A673 (cell line): ENCODE measurements at regions of chr16 and their contacts with region 1.

Region 1: DNA sequence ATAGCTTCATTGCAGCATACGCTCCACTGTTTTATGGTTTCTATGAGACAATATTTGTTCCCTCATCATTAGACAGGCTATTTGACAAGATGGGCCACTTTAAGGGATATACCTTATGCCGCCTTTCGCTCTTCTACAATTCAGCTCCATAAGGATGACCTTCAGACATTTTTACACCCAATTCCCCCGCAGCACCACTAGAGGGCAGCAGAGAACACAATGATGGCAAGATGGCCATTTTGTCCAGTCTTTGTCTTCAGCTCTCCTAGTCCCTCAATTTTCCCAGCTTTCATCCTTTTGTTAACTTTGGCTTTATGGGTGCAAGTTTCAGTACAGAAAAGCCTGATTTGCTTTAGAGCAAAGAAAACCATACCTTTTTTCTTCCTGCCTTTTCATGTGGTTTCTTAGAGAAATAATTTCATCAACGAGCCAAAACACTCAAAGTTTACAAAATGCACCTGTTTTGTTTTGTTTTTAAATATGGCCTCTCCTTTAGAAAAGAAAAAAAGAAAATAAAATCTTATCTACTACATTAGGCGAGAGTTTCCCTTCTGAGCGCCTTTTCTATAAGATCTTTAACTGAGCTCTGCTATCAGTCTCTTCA is 355.3 kb downstream of the TOX3 start:
- DNase-seq: peak; percentile 82
- H3K4me3 ChIP-seq: no peak overlapping the region
- H3K27ac ChIP-seq: no peak overlapping the region
- H3K4me1 ChIP-seq: no peaks in the 10 kb centered on the region
- H3K27me3 ChIP-seq: no peaks in the 10 kb centered on the region
- CTCF ChIP-seq: peak; percentile 91

Region 2: DNA sequence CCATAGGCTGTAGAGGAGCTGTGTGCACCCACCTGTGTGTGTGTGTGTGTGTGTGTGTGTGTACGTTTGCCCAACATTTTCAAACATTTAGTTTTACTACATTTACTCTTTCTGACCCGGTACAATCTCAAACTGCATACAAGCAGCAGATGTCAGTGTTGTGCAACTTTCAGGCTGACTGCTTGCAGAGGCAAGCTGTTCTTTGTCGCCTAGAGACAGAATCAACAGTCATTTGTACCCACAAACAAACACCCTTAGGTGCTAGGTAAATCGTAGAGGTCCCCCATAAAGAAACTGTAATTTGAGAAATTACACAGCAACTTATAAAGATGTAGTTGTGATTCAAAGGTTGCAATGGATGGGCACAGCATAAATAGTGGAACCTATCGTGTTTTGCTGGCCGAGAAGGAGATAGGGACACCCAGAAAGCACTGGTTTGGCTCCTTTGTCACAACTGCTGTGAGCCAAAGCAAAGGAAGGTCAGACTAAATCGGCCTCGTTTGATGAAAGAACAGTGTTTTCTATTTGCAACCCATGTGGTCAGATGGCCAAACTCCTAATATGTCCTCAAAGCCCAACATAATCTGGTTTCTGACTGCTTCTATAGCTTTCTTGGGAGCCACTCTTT is 123.1 kb before region 1 on chr16:
- CTCF ChIA-PET with region 1: interaction called, 11 read pairs
- POLR2A ChIA-PET with region 1: no interaction called
- intact Hi-C with region 1: loop called (anchors 1 kb)
- DNase-seq: peak; percentile 67
- H3K4me3 ChIP-seq: no peak overlapping the region
- H3K27ac ChIP-seq: no peak overlapping the region
- H3K4me1 ChIP-seq: peaks cover 3% of the 10 kb centered on the region
- H3K27me3 ChIP-seq: peaks cover 6% of the 10 kb centered on the region
- CTCF ChIP-seq: peak; percentile 60

Region 3: GRCh38 chr16:52456368-52456767 is 264.7 kb after region 1 on chr16:
- CTCF ChIA-PET with region 1: no interaction called
- POLR2A ChIA-PET with region 1: no interaction called
- intact Hi-C with region 1: loop called (anchors 5 kb)
- DNase-seq: no peak
- H3K4me3 ChIP-seq: no peak overlapping the region
- H3K27ac ChIP-seq: no peak overlapping the region
- H3K4me1 ChIP-seq: peaks cover 35% of the 10 kb centered on the region
- H3K27me3 ChIP-seq: no peaks in the 10 kb centered on the region
- CTCF ChIP-seq: no peak

Region 4: DNA sequence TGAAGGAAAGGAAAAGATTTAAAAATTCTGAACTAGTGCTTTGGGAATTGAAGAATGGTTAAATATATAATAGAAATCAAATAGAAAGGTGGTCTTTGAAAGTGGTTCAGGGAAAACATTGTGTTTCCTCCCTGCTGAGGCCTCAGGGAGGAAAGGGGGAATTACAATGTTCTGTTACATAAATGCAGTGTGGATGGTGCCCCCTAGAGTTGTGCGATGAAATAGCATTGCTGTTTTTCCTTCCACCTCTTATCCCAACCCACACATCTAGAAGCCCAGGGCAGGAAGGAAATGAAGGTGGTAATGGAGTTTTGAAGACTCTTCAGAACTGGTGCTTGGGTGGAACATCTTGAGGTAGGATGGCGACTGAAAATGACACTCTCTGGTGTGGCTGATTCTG is 361.7 kb after region 1 on chr16:
- CTCF ChIA-PET with region 1: no interaction called
- POLR2A ChIA-PET with region 1: no interaction called
- intact Hi-C with region 1: loop called (anchors 10 kb)
- DNase-seq: no peak
- H3K4me3 ChIP-seq: no peak overlapping the region
- H3K27ac ChIP-seq: no peak overlapping the region
- H3K4me1 ChIP-seq: no peaks in the 10 kb centered on the region
- H3K27me3 ChIP-seq: peaks cover 32% of the 10 kb centered on the region
- CTCF ChIP-seq: peak; percentile 61

Region 5: DNA sequence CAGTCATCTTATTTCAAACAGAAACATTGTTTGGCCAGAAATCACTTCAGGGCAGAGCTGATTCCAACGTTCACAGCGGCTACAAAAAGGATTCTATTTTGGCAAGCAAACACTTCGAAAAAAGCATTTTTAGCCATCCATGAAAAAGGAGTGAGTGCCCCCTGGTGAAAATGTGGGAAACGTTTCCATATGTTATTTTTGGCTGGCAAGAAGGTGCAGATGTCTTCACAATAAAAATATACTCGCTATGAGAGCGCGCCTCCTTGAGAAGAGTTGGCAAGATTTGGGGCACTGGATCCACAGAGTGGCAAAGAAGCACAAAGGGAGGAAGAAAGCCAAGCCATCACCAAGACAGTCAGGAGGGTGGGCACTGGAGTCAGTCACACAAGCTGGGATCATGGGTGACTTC is 670.0 kb after region 1 on chr16:
- CTCF ChIA-PET with region 1: interaction called, 16 read pairs
- POLR2A ChIA-PET with region 1: no interaction called
- intact Hi-C with region 1: loop called (anchors 2 kb)
- DNase-seq: peak; percentile 80
- H3K4me3 ChIP-seq: no peak overlapping the region
- H3K27ac ChIP-seq: no peak overlapping the region
- H3K4me1 ChIP-seq: peaks cover 4% of the 10 kb centered on the region
- H3K27me3 ChIP-seq: peaks cover 24% of the 10 kb centered on the region
- CTCF ChIP-seq: peak; percentile 71

Region 6: GRCh38 chr16:52912565-52913173 is 721.0 kb after region 1 on chr16:
- CTCF ChIA-PET with region 1: interaction called, 7 read pairs
- POLR2A ChIA-PET with region 1: no interaction called
- intact Hi-C with region 1: loop called (anchors 2 kb)
- DNase-seq: peak; percentile 79
- H3K4me3 ChIP-seq: no peak overlapping the region
- H3K27ac ChIP-seq: no peak overlapping the region
- H3K4me1 ChIP-seq: no peaks in the 10 kb centered on the region
- H3K27me3 ChIP-seq: peaks cover under 1% of the 10 kb centered on the region
- CTCF ChIP-seq: peak; percentile 89

Region 7: GRCh38 chr16:53022374-53022773 is 830.7 kb after region 1 on chr16:
- CTCF ChIA-PET with region 1: no interaction called
- POLR2A ChIA-PET with region 1: no interaction called
- intact Hi-C with region 1: loop called (anchors 5 kb)
- DNase-seq: peak; percentile 79
- H3K4me3 ChIP-seq: no peak overlapping the region
- H3K27ac ChIP-seq: no peak overlapping the region
- H3K4me1 ChIP-seq: no peaks in the 10 kb centered on the region
- H3K27me3 ChIP-seq: no peaks in the 10 kb centered on the region
- CTCF ChIP-seq: peak; percentile 74